PC-3 (cell line): ENCODE measurements at regions of chr3 and their contacts with region 1.

Region 1: DNA sequence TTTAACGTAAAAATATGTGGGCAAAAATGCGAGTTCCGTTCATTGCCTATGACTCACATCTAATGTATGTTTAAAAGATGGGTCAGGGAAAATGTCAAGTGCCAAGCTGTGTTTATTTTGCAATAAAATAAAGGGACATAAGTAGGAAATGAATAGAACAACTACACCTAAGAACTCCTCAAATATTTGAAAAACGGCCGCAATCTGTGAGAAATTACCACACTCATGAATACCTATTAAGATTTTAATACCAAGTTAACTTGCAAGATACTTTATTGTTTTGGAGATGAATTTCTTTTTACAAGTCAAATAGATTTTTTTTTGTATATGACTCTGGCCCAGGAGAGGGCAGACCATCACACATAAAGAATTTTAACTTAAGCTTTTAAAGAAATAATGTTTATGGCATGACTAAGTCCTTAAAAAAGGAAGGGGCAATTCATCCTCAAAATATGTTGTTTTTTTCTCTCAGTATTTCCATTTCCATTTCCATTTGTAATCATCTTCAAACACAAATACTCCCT is 152.7 kb downstream of the SUCNR1 start:
- DNase-seq: peak; percentile 96
- ATAC-seq: peak; percentile 49
- H3K4me3 ChIP-seq: peak overlapping the region; percentile 38; the same call in 1 of the 2 replicates
- H3K27ac ChIP-seq: peak overlapping the region; percentile 74
- H3K4me1 ChIP-seq: peaks cover 39% of the 10 kb centered on the region
- H3K27me3 ChIP-seq: no peaks in the 10 kb centered on the region
- CTCF ChIP-seq: peak; percentile 67

Region 2: GRCh38 chr3:151434151-151434890 is 591.8 kb before region 1 on chr3:
- CTCF ChIA-PET with region 1: no interaction called
- POLR2A ChIA-PET with region 1: no interaction called
- intact Hi-C with region 1: loop called (anchors 2 kb)
- DNase-seq: peak; percentile 92
- ATAC-seq: peak; percentile 83
- H3K4me3 ChIP-seq: peak overlapping the region; percentile 18; the same call in 1 of the 2 replicates
- H3K27ac ChIP-seq: peak overlapping the region; percentile 95
- H3K4me1 ChIP-seq: peaks cover 65% of the 10 kb centered on the region
- H3K27me3 ChIP-seq: no peaks in the 10 kb centered on the region
- CTCF ChIP-seq: no peak

Region 3: GRCh38 chr3:151976211-151977050 is 49.7 kb before region 1 on chr3:
- CTCF ChIA-PET with region 1: no interaction called
- POLR2A ChIA-PET with region 1: interaction called, 13 read pairs
- intact Hi-C with region 1: loop called (anchors 1 kb)
- DNase-seq: peak; percentile 98
- ATAC-seq: peak; percentile 94
- H3K4me3 ChIP-seq: peak overlapping the region; percentile 30; the same call in 1 of the 2 replicates
- H3K27ac ChIP-seq: peak overlapping the region; percentile 88
- H3K4me1 ChIP-seq: peaks cover 58% of the 10 kb centered on the region
- H3K27me3 ChIP-seq: no peaks in the 10 kb centered on the region
- CTCF ChIP-seq: no peak; the same call in 1 of the 2 replicates

Region 4: GRCh38 chr3:152159328-152159727 is 133.2 kb after region 1 on chr3:
- CTCF ChIA-PET with region 1: no interaction called
- POLR2A ChIA-PET with region 1: no interaction called
- intact Hi-C with region 1: loop called (anchors 2 kb)
- DNase-seq: peak; percentile 93
- ATAC-seq: peak; percentile 99
- H3K4me3 ChIP-seq: peak overlapping the region; percentile 7; the same call in 1 of the 2 replicates
- H3K27ac ChIP-seq: peak overlapping the region; percentile 29
- H3K4me1 ChIP-seq: peaks cover 23% of the 10 kb centered on the region
- H3K27me3 ChIP-seq: no peaks in the 10 kb centered on the region
- CTCF ChIP-seq: no peak

Region 5: DNA sequence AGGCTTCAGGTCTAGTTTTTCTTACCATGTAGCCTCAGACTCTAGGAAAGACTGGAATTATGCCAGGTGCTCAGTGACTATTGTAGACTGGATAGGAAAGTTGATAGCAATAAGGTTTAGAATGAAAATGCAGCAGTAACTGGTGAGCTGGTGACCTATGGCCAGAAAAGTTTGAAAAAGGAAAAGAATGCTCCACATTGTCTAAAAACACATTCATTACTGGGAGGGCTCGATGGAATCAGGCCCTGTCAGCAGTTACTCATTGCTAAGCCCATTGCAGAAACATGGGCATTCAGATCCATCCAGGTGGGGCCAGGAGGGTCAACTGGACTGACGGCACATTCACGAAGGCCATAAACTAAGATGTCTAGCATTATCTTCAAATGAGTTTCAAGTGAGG is 233.9 kb after region 1 on chr3:
- CTCF ChIA-PET with region 1: no interaction called
- POLR2A ChIA-PET with region 1: no interaction called
- intact Hi-C with region 1: no loop called
- DNase-seq: peak; percentile 78
- ATAC-seq: 0 out of 2 replicates have a peak, but pooled peaks have one; percentile 8
- H3K4me3 ChIP-seq: no peak overlapping the region
- H3K27ac ChIP-seq: peak overlapping the region; percentile 7; the same call in 1 of the 2 replicates
- H3K4me1 ChIP-seq: peaks cover 32% of the 10 kb centered on the region
- H3K27me3 ChIP-seq: no peaks in the 10 kb centered on the region
- CTCF ChIP-seq: no peak

Region 6: GRCh38 chr3:152298393-152299242 is 272.5 kb after region 1 on chr3:
- CTCF ChIA-PET with region 1: no interaction called
- POLR2A ChIA-PET with region 1: no interaction called
- intact Hi-C with region 1: loop called (anchors 2 kb)
- DNase-seq: peak; percentile 73
- ATAC-seq: peak; percentile 60
- H3K4me3 ChIP-seq: peak overlapping the region; percentile 29; the same call in 1 of the 2 replicates
- H3K27ac ChIP-seq: peak overlapping the region; percentile 73
- H3K4me1 ChIP-seq: peaks cover 39% of the 10 kb centered on the region
- H3K27me3 ChIP-seq: no peaks in the 10 kb centered on the region
- CTCF ChIP-seq: no peak

Region 7: GRCh38 chr3:152328841-152329240 is 302.7 kb after region 1 on chr3:
- CTCF ChIA-PET with region 1: interaction called, 3 read pairs
- POLR2A ChIA-PET with region 1: no interaction called
- intact Hi-C with region 1: loop called (anchors 1 kb)
- DNase-seq: peak; percentile 94
- ATAC-seq: peak; percentile 63
- H3K4me3 ChIP-seq: peak overlapping the region; percentile 52
- H3K27ac ChIP-seq: peak overlapping the region; percentile 93
- H3K4me1 ChIP-seq: peaks cover 58% of the 10 kb centered on the region
- H3K27me3 ChIP-seq: no peaks in the 10 kb centered on the region
- CTCF ChIP-seq: no peak